GM18951 (cell line): ENCODE measurements at regions of chr14 and their contacts with region 1.

Region 1: DNA sequence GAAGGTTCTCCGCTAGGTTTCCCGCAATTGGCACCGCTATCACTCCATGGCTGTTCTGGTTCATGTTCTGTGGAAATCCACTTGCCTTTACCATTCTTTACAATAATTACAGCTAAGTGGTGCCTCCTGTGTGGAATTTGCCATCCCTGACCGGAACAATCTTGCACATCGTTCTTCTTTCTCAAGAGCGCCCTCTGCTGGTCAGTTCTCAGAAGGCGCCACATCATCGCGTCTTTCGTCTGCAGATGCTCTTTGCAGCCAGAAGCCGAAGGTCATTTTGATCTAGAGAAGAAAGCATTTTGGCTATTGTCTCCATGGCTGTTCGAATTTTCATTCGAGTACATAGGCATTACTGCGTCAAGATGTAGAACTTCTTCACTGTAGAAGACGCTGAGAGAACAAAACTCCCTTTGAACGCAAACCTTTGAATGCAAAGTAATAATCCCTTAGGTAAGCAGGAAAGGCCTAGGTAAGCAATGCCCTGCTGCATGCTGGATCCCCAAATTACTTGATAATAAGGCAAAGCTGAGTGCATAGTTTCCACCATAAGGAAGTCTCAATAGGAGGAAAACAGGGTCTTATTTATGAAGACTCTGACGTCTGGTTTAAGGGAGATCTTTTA is 10.1 kb upstream of the RTRAF start:
- POLR2A ChIP-seq: no peak

Region 2: GRCh38 chr14:51846631-51847488 is 132.3 kb before region 1 on chr14:
- in situ Hi-C with region 1: loop called (anchors 10 kb)
- POLR2A ChIP-seq: peak; percentile 51

Region 3: GRCh38 chr14:52060080-52060479 is 80.9 kb after region 1 on chr14:
- in situ Hi-C with region 1: no loop called
- POLR2A ChIP-seq: no peak